ENCODE measurements at regions of chr3 and their contacts with region 1.

Region 1: GRCh38 chr3:132317229-132317948 is at the start of gene ACP3:
- DNase-seq: peak; percentile 69 to 95
- H3K4me3 ChIP-seq: peak within 1 kb of the TSS; percentile 37; the same call in 1 of the 2 replicates
- H3K27ac ChIP-seq: peak within 1 kb of the TSS; percentile 94
- H3K4me1 ChIP-seq: peaks cover 35% of the 10 kb centered on the region
- H3K27me3 ChIP-seq: no peaks in the 10 kb centered on the region
- CTCF ChIP-seq: no peak
- total RNA-seq, gene ACP3: 1.5 and 3.5 TPM in 2 replicates

Region 2: DNA sequence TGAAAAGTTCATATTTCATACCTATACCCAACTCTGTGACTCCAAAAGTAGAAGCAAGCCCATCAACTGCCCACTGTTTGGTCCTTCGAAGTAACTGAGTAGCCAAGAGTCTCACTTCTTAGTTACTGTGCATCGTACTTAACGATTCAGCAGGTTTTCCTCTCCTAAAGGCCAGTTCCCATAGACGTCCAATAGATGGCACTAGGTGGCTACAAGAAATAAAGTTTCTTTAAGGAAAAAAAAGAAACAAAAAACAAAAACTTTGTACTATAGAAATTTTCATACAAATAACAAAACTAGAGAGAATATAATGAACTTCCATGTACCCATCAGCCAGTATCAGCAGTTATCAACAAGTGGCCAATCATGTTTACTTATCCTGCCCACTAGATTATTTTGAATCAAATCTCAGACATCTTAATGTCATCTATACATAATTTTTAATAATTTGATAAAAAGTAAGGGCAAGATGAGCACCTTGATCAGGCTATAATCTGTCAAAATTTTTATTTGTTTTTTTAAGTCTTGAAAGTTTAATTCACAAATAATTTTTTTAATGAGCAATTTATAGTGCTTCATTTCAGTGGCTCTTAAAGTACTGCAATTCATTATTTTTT is 64.0 kb before region 1 on chr3:
- CTCF ChIA-PET with region 1: interaction called, 10 read pairs
- POLR2A ChIA-PET with region 1: no interaction called
- intact Hi-C with region 1: loop called (anchors 2 kb)
- DNase-seq: peak; percentile 16 to 56
- H3K4me3 ChIP-seq: no peak overlapping the region
- H3K27ac ChIP-seq: no peak overlapping the region
- H3K4me1 ChIP-seq: peaks cover 34% of the 10 kb centered on the region
- H3K27me3 ChIP-seq: no peaks in the 10 kb centered on the region
- CTCF ChIP-seq: peak; percentile 83

Region 3: DNA sequence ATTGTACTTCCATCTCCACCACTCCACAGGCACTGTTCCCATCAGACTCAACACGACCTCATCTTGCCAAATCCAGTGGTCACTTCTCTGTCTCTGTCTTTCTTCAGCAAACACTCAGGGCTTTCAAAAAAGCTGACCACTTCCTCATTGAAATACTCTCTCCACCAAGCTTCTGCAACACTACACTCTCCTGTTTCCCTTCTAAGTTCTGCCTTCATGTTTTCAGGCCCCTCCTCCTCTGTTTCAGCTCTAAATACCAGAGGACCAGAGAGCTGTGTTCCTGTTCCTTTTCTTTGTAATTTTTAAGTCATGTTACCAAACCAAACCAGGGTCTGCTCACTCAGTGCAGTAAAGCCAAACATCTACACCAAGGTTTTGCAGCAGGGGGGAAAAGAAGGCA is 33.9 kb before region 1 on chr3:
- CTCF ChIA-PET with region 1: interaction called, 3 read pairs
- POLR2A ChIA-PET with region 1: interaction called, 3 read pairs
- intact Hi-C with region 1: loop called (anchors 1 kb)
- DNase-seq: peak; percentile 14 to 59
- H3K4me3 ChIP-seq: no peak overlapping the region
- H3K27ac ChIP-seq: no peak overlapping the region
- H3K4me1 ChIP-seq: peaks cover 12% of the 10 kb centered on the region; the same call in 1 of the 2 replicates
- H3K27me3 ChIP-seq: no peaks in the 10 kb centered on the region
- CTCF ChIP-seq: no peak

Measured in PC-9 (cell line).